ENCODE measurements at regions of chrX and their contacts with region 1.

Region 1: DNA sequence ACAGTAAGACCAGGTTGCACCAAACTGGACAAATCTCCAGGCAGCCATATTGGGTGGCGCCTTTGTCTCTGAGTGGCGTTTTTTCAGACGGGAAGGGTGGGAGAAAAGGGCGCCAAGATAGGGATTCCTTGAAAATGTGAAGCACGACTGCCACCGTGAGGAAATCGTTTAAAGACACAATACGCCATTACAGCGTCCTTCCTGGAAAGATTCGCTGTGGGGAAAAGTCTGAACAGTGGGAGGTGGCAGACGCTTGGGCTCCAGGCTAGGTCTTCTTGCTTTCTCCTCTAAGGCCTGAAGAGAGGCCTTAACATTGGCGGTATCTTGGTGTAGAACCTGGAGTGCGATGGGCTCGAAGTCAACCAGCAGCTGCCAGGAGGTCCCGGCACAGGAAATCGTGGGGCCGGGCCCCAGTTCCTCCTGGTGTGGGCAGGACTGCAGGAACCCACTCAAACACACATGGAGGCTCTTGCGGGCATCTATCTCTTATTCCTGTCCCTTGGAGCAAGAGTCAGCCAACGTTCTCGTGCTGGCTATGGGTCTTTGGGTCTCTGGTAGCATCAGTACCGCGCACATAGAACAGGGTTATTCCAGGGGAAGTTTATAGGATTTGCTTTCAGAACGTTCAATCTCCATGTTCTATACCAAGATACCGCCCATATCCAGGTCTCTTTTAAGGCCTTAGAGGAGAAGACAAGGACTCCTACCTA is 208.8 kb downstream of the OR13H1 start:
- DNase-seq: peak; percentile 88
- ATAC-seq: peak; percentile 75
- H3K4me3 ChIP-seq: peak overlapping the region; percentile 62
- H3K27ac ChIP-seq: peak overlapping the region; percentile 96
- H3K4me1 ChIP-seq: no peaks in the 10 kb centered on the region
- H3K27me3 ChIP-seq: no peaks in the 10 kb centered on the region; the same call in 1 of the 2 replicates
- CTCF ChIP-seq: peak; percentile 58
- POLR2A ChIP-seq: no peak
- RAD21 ChIP-seq: peak; percentile 62

Region 2: DNA sequence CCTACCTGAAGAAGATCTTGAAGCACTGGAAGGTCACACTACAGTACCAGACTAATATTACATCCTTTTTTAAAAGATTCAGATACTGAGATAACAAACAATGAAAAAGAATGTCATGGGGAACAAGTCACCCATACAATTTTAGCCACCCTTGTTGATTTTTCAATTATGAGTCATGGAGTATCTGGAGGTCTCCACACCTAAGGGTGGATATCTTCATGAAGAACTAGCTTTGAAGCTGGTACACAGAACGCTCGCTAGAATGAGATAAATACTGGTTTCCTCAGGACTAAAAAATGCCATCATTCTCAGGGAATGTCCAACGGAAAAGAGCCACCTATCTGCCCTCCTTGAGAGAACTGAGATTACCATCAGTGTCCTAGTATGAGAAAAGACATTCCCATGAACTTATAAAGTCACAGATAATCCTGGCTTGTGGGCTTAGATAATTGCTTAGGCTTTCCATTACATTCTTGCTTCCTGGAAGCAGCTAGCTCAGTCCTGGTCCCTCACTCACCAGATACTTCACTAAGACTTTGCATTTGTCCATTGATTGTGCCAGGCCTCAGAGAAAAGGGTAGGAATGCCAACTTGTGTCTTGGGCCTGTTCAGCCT is 42.1 kb before region 1 on chrX:
- CTCF ChIA-PET with region 1: no interaction called
- POLR2A ChIA-PET with region 1: no interaction called
- dilution Hi-C with region 1: no loop called
- in situ Hi-C with region 1: no loop called
- intact Hi-C with region 1: loop called (anchors 2 kb)
- DNase-seq: no peak
- ATAC-seq: no peak; the same call in 1 of the 2 replicates
- H3K4me3 ChIP-seq: peak overlapping the region; percentile 12; the same call in 1 of the 2 replicates
- H3K27ac ChIP-seq: no peak overlapping the region
- H3K4me1 ChIP-seq: no peaks in the 10 kb centered on the region
- H3K27me3 ChIP-seq: no peaks in the 10 kb centered on the region
- CTCF ChIP-seq: no peak
- POLR2A ChIP-seq: no peak
- RAD21 ChIP-seq: no peak

Region 3: GRCh38 chrX:131734621-131735020 is 18.0 kb before region 1 on chrX:
- CTCF ChIA-PET with region 1: no interaction called
- POLR2A ChIA-PET with region 1: no interaction called
- dilution Hi-C with region 1: no loop called
- in situ Hi-C with region 1: no loop called
- intact Hi-C with region 1: no loop called
- DNase-seq: peak; percentile 81
- ATAC-seq: no peak; the same call in 1 of the 2 replicates
- H3K4me3 ChIP-seq: peak overlapping the region; percentile 3; the same call in 1 of the 2 replicates
- H3K27ac ChIP-seq: no peak overlapping the region
- H3K4me1 ChIP-seq: no peaks in the 10 kb centered on the region
- H3K27me3 ChIP-seq: no peaks in the 10 kb centered on the region; the same call in 1 of the 2 replicates
- CTCF ChIP-seq: peak; percentile 44
- POLR2A ChIP-seq: no peak
- RAD21 ChIP-seq: peak; percentile 63

Region 4: DNA sequence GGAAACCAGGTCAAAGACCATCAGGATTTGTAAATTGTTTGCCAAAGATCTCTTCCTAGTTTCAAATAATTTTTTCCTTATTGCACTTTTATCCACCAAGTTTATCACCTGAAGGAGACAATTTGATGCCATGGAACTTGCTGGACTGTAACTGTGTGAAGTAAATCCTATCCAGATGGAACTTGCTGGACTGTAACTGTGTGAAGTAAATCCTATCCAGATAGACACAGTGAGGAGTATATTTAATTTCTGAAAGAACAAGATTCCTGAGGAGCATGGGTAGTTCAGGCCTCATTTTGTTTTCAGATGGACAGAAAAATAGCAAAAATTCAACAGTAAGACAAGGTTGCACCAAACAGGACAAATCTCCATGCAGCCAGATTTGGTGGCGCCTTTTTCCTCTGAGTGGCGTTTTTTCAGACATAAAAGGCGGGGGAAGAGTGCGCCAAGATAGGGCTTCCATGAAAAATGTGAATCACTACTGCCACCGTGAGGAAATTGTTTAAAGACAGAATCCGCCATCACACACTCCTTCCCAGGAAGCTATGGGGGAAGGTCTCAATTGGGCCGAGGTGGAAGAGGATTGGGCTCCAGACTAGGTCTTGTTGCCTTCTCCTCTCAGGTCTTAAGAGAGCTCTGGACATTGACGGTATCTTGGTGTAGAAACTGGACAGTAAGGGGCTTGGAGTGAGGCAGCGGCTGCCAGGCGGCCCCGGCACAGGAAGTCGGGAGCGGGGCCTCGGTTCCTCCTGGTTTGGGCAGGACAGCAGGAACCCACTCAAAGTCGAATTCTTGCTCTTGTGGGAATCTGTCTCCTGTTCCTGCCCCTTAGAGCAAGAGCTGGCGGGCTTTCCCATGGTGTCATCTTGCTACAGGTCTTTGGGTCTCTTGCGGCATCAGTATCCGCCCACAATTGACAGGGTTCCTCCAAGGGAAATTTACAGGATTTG is 25.9 kb after region 1 on chrX:
- CTCF ChIA-PET with region 1: no interaction called
- POLR2A ChIA-PET with region 1: no interaction called
- dilution Hi-C with region 1: no loop called
- in situ Hi-C with region 1: no loop called
- intact Hi-C with region 1: loop called (anchors 1 kb)
- DNase-seq: peak; percentile 76
- ATAC-seq: peak; percentile 89
- H3K4me3 ChIP-seq: peak overlapping the region; percentile 85
- H3K27ac ChIP-seq: peak overlapping the region; percentile 94; the same call in 1 of the 2 replicates
- H3K4me1 ChIP-seq: 0 out of 2 replicates have a peak, but pooled peaks cover 2% of the 10 kb centered on the region
- H3K27me3 ChIP-seq: peaks cover 2% of the 10 kb centered on the region; the same call in 1 of the 2 replicates
- CTCF ChIP-seq: peak; percentile 62
- POLR2A ChIP-seq: no peak
- RAD21 ChIP-seq: peak; percentile 65

Region 5: DNA sequence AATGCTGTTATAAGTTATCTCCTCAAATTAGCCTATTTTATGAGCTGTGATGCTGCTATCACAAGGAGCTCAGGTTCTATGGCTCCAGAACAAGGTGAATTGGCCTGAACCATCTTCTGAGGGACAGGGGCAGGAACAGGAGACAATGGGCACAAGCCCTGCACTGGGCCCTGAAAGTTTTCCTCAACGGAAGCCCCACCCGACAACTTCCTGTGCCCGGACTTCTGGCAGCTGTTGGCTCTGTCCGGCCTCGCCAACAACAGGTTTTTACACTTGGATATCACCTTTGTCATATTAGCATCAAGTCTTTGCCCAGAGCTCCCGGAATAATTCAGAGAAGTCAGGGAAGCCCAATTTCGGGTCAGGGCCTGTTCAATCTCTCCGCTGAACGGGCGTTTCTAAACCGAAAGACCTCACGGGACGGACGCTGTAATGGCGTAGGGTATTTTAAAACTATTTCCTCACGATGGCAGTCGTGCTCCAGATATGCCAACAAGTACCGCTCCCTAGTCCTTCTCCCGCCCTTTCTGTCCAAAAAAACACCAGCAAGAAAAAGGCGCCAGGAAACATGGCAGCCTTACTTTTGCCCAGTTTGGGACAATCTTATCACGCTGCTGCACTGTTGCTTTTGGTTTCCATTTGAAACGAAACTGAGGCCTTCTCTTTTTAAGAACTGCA is 69.4 kb after region 1 on chrX:
- CTCF ChIA-PET with region 1: no interaction called
- POLR2A ChIA-PET with region 1: no interaction called
- dilution Hi-C with region 1: no loop called
- in situ Hi-C with region 1: no loop called
- intact Hi-C with region 1: loop called (anchors 1 kb)
- DNase-seq: peak; percentile 85
- ATAC-seq: peak; percentile 94
- H3K4me3 ChIP-seq: peak overlapping the region; percentile 61
- H3K27ac ChIP-seq: peak overlapping the region; percentile 94
- H3K4me1 ChIP-seq: no peaks in the 10 kb centered on the region
- H3K27me3 ChIP-seq: peaks cover 5% of the 10 kb centered on the region
- CTCF ChIP-seq: peak; percentile 70
- POLR2A ChIP-seq: no peak
- RAD21 ChIP-seq: peak; percentile 76

Measured in IMR-90 (cell line).